ENCODE measurements at regions of chr13 and their contacts with region 1.

Region 1: GRCh38 chr13:21297914-21298831 is 121.7 kb downstream of the MRPL57 start:
- DNase-seq: peak; percentile 96
- H3K4me3 Mint-ChIP-seq: peak overlapping the region; percentile 95
- H3K27ac Mint-ChIP-seq: peak overlapping the region; percentile 92
- H3K4me1 Mint-ChIP-seq: peaks cover 26% of the 10 kb centered on the region
- H3K27me3 Mint-ChIP-seq: no peaks in the 10 kb centered on the region

Region 2: DNA sequence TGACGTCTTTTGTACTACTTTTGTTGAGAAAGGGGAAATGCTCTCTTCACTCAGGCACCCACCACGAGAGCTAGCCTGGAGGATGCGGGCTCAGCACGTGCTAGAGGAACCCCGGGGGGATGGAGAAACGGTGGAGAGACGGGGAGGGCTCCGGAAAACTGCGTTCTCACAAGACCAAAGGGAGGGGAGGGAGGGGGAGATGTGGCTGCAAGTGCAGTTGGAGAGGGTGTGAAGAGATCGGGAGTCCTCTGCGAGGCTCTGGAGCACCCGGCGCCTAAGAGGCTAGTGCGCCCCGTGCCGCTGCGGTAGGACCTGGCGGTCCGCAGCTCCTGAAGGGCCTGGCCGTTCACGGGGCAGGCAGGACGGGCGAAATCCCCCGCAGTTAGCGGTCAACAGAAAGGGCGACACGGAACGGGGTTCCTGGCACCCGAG is 352.2 kb before region 1 on chr13:
- intact Hi-C with region 1: loop called (anchors 1 kb)
- DNase-seq: no peak
- H3K4me3 Mint-ChIP-seq: peak overlapping the region; percentile 58
- H3K27ac Mint-ChIP-seq: peak overlapping the region; percentile 29
- H3K4me1 Mint-ChIP-seq: peaks cover 6% of the 10 kb centered on the region
- H3K27me3 Mint-ChIP-seq: peaks cover 42% of the 10 kb centered on the region

Region 3: GRCh38 chr13:21176220-21176982 is 121.8 kb before region 1 on chr13 and contains the starts of genes MRPL57 and SKA3:
- intact Hi-C with region 1: loop called (anchors 2 kb)
- DNase-seq: peak; percentile 99
- H3K4me3 Mint-ChIP-seq: peak within 1 kb of the TSS; percentile 99
- H3K27ac Mint-ChIP-seq: peak within 1 kb of the TSS; percentile 98
- H3K4me1 Mint-ChIP-seq: peaks cover 23% of the 10 kb centered on the region
- H3K27me3 Mint-ChIP-seq: no peaks in the 10 kb centered on the region
- total RNA-seq, gene MRPL57: 32.7 and 33.0 TPM in 2 replicates
- total RNA-seq, gene SKA3: 35.6 and 39.6 TPM in 2 replicates

Region 4: DNA sequence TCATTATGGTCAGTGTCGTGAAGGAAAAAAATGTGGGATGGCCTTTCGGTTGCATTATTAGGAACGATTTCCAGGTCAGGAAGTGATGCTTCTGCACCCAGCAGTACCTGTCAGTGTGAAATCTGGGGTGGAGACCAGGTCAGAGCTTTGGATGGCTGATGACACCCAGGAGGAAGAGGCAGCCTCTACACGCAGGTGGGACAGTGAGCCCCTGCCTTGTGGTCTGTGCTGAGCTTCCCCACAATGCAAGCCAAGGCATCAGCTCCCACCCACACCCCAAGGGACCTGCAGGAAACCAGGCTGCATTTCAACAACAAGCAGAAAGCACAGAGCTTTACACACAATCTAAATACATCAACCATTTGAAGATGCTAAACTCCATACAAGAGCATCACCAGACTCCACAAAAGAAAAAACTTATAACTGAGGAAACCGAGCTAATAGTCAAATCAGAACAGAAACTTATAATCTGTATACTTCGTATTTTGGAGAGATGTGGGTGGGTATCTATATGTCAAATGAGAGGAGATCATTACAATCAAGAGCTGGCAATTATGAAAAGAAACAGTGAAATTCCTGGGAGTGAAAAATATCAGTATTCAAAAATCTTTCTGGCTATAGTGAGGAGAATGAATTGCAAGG is 30.8 kb after region 1 on chr13:
- intact Hi-C with region 1: loop called (anchors 1 kb)
- DNase-seq: no peak
- H3K4me3 Mint-ChIP-seq: peak overlapping the region; percentile 15
- H3K27ac Mint-ChIP-seq: peak overlapping the region; percentile 15
- H3K4me1 Mint-ChIP-seq: peaks cover 41% of the 10 kb centered on the region
- H3K27me3 Mint-ChIP-seq: no peaks in the 10 kb centered on the region

Region 5: GRCh38 chr13:21476893-21477472 is 178.8 kb after region 1 on chr13:
- intact Hi-C with region 1: loop called (anchors 1 kb)
- DNase-seq: peak; percentile 95
- H3K4me3 Mint-ChIP-seq: peak overlapping the region; percentile 86
- H3K27ac Mint-ChIP-seq: peak overlapping the region; percentile 78
- H3K4me1 Mint-ChIP-seq: peaks cover 10% of the 10 kb centered on the region
- H3K27me3 Mint-ChIP-seq: peaks cover 3% of the 10 kb centered on the region

Region 6: GRCh38 chr13:21501686-21502085 is 203.5 kb after region 1 on chr13:
- intact Hi-C with region 1: no loop called
- DNase-seq: no peak
- H3K4me3 Mint-ChIP-seq: no peak overlapping the region
- H3K27ac Mint-ChIP-seq: no peak overlapping the region
- H3K4me1 Mint-ChIP-seq: no peaks in the 10 kb centered on the region
- H3K27me3 Mint-ChIP-seq: no peaks in the 10 kb centered on the region

Measured in activated CD4-positive, alpha-beta T cell treated with anti-CD3 and anti-CD28 coated beads, Interleukin-2, amount 10 ng/mL, durations not matched to agents 24 days and 14 days (primary cell).